ENCODE measurements at regions of chr1 and their contacts with region 1.

Region 1: DNA sequence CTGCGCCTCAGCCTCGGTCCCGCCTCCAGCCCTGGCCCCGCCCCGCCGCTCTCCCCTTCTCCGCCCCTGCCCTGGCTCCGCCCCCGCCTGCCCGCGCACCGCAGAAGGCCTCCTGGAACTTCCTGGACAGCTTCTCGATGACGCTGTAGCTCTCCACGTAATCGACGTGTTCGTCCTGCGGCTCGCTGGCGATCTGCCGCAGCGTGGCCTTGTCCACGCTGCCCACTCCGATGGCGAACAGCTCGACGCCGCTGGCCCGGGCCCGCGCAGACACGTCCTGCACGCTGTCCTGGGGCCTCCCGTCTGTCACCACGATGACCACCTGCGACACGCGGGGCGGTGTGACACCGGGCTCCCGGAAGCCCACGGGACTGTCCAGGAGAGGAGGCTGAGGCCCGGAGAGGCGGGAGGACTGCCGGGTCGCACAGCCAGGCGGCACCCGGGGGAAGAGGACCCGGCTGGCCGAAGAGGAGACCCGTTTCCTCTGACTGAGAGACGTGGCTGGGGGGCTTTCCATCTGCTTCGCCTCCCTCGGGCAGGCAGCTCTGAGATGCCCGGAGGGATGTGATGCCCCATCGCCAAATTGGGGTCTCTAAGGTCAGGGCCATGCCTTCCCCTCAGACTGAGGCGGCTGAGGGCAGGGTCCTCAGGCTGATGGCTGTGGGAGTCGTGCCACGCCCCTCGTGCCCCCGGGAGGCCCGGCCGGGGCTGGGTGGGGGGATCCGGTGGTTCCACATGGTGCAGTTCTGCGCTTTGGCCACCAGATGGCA is 4.6 kb downstream of the MATN1 start:
- DNase-seq: peak; percentile 75 to 97 (median 96)
- ATAC-seq: peak; percentile 78
- H3K4me3 ChIP-seq: peak overlapping the region; percentile 88
- H3K4me3 Mint-ChIP-seq: peak overlapping the region; percentile 83 to 96 (median 91)
- H3K27ac ChIP-seq: peak overlapping the region; percentile 100
- H3K27ac Mint-ChIP-seq: peak overlapping the region; percentile 86 to 97 (median 94)
- H3K4me1 ChIP-seq: peaks cover 10 to 37% of the 10 kb centered on the region in 2 donors
- H3K4me1 Mint-ChIP-seq: peaks cover 18 to 49% (median 38%) of the 10 kb centered on the region in 7 donors
- H3K27me3 ChIP-seq: no peaks in the 10 kb centered on the region
- H3K27me3 Mint-ChIP-seq: no peaks in the 10 kb centered on the region

Region 2: DNA sequence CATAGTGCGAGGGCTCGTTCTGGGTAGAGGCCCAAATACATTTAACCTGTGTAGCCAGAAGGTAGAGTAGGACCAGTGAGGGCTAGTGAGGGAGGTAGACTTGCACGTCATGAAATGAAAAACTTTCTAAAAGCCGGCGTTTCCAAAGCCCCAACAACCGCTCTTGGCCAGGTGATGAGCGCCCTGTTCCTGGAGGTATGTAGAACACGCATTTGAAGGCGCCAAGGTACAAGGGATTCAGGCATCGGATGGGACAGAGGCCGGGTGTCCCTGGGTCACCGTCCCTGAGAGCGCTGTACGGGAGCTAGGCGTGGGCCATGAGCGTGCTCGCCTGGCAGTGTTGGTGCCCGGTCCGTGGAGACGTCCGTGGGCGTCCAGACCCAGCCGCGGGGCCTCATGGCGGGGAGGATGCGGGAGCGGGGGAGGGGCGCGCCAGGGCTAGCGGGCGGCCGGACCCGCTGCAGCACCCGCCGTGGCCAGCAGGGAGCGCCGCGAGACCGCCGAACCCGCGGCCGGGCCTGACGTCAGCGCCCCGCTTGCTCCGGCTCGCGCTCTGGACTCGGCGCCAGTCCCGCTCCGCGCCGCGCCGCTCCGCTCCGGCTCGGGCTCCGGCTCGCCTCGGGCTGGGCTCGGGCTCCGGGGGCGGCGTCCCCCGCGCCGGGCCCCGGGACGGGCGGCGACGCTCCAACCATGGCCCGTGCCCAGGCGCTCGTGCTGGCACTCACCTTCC is 1482.7 kb before region 1 on chr1 and contains the start of gene PTPRU:
- CTCF ChIA-PET with region 1: interaction called, 3 read pairs
- POLR2A ChIA-PET with region 1: no interaction called
- intact Hi-C with region 1: loop called in 1 of 2 experiments (anchors 2 kb)
- DNase-seq: peak; percentile 50 to 96 (median 78)
- ATAC-seq: peak; percentile 96
- H3K4me3 ChIP-seq: peak within 1 kb of the TSS; percentile 14
- H3K4me3 Mint-ChIP-seq: peak within 1 kb of the TSS; percentile 79 to 97 (median 86)
- H3K27ac ChIP-seq: no peak within 1 kb of the TSS
- H3K27ac Mint-ChIP-seq: peak within 1 kb of the TSS in 6 of 9 donors; percentile 0 to 80 (median 25)
- H3K4me1 ChIP-seq: peaks cover 7 to 17% of the 10 kb centered on the region in 2 donors
- H3K4me1 Mint-ChIP-seq: peaks cover 19 to 29% (median 28%) of the 10 kb centered on the region in 7 donors
- H3K27me3 ChIP-seq: peaks cover 12 to 14% of the 10 kb centered on the region in 2 donors
- H3K27me3 Mint-ChIP-seq: peaks cover 34 to 66% (median 50%) of the 10 kb centered on the region in 5 donors
- total RNA-seq, gene PTPRU: 0.17 to 0.42 TPM in 2 of 5 experiments, not detected in the others

Region 3: GRCh38 chr1:30743584-30744059 is 24.8 kb after region 1 on chr1:
- CTCF ChIA-PET with region 1: interaction called, 52 read pairs
- POLR2A ChIA-PET with region 1: interaction called, 1,281 read pairs
- intact Hi-C with region 1: loop called (anchors 1 kb)
- DNase-seq: peak in 8 of 9 donors; percentile 58 to 90 (median 82)
- ATAC-seq: peak; percentile 83
- H3K4me3 ChIP-seq: peak overlapping the region; percentile 45
- H3K4me3 Mint-ChIP-seq: peak overlapping the region; percentile 82 to 98 (median 91)
- H3K27ac ChIP-seq: peak overlapping the region; percentile 98
- H3K27ac Mint-ChIP-seq: peak overlapping the region; percentile 90 to 100 (median 97)
- H3K4me1 ChIP-seq: peaks cover 84 to 86% of the 10 kb centered on the region in 2 donors
- H3K4me1 Mint-ChIP-seq: peaks cover 75 to 100% (median 97%) of the 10 kb centered on the region in 7 donors
- H3K27me3 ChIP-seq: no peaks in the 10 kb centered on the region
- H3K27me3 Mint-ChIP-seq: no peaks in the 10 kb centered on the region

Region 4: DNA sequence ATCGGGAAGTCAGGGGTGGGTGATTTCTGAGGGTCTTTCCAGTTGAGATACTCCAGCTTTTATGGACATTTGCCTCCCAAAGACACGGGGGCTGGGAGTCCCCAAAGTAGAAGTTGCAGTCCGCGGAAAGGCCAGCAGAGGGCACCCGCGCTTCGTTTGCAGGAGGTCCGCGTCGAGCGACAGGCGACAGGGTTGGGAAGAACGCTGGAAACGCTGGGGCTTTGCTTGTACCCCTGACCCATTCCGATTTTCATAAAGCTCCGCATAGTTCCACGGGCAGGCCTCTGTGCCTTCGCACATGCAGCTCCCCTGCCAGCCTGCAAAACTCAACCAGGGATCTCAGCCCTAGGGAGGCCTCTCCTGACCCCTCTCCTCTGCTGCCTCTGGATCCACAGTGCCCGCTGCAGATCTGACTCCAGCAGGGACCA is 83.0 kb after region 1 on chr1:
- CTCF ChIA-PET with region 1: interaction called, 19 read pairs
- POLR2A ChIA-PET with region 1: no interaction called
- intact Hi-C with region 1: no loop called
- DNase-seq: peak; percentile 47 to 85 (median 70)
- ATAC-seq: peak; percentile 85
- H3K4me3 ChIP-seq: no peak overlapping the region
- H3K4me3 Mint-ChIP-seq: peak overlapping the region in 4 of 10 donors; percentile 25 to 66 (median 42)
- H3K27ac ChIP-seq: no peak overlapping the region
- H3K27ac Mint-ChIP-seq: peak overlapping the region in 1 of 9 donors; percentile 69
- H3K4me1 ChIP-seq: no peaks in the 10 kb centered on the region
- H3K4me1 Mint-ChIP-seq: peaks cover 0 to 9% (median 4%) of the 10 kb centered on the region in 7 donors
- H3K27me3 ChIP-seq: peaks cover 0 to 5% of the 10 kb centered on the region in 2 donors
- H3K27me3 Mint-ChIP-seq: peaks cover 25 to 48% (median 29%) of the 10 kb centered on the region in 5 donors

Region 5: DNA sequence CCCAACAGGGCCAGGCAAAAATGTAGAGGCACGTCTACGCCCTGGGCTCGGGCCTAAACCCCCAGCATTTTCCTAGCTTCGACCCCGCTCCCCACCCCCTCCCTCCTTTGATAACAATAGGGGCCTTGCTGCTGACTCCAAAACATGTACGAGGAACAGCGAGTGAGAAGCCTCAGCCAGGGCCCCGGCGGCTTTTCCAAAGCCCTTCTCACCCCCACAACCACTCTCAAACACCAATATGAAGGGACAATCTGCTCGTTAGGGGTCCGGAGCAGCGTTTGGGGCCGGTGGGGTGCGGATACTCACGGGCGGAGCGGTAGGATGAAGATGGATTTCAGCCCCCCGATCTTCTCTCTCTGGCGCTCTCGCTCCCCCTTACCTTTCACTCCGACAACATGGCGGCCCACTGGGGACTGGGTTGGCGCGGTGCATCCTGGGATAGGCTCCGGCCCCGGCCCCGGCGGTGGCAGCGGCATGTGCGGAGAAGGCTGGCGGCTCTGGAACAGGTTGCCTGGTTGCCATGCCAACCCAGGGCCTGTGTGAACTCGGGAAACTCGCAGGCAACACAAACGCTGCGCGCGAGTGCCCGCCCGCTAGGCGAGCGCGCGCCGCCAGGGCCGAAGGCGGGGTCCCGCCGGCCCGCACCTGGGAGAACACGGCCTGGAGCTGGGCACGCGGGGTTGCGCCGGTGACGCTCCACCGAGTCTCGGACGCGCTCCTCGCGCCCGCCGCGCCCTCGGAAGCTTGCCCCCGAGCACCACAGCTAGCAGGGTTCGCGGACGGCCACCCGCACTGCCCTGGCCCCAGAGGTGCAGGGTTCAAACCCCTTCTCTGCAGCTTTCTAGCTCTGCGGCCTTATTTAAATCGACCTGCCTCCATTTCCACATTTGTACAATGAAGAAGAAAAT is 346.7 kb after region 1 on chr1 and contains the start of gene PUM1:
- CTCF ChIA-PET with region 1: no interaction called
- POLR2A ChIA-PET with region 1: no interaction called
- intact Hi-C with region 1: loop called (anchors 1 to 10 kb)
- DNase-seq: peak; percentile 95 to 99 (median 97)
- ATAC-seq: peak; percentile 99
- H3K4me3 ChIP-seq: peak within 1 kb of the TSS; percentile 97
- H3K4me3 Mint-ChIP-seq: peak within 1 kb of the TSS; percentile 96 to 100 (median 98)
- H3K27ac ChIP-seq: peak within 1 kb of the TSS; percentile 95
- H3K27ac Mint-ChIP-seq: peak within 1 kb of the TSS; percentile 97 to 99 (median 98)
- H3K4me1 ChIP-seq: peaks cover 10 to 18% of the 10 kb centered on the region in 2 donors
- H3K4me1 Mint-ChIP-seq: peaks cover 20 to 38% (median 29%) of the 10 kb centered on the region in 7 donors
- H3K27me3 ChIP-seq: no peaks in the 10 kb centered on the region
- H3K27me3 Mint-ChIP-seq: no peaks in the 10 kb centered on the region
- total RNA-seq, gene PUM1: 114 to 226 (median 174) TPM

Region 6: GRCh38 chr1:31335007-31335406 is 616.2 kb after region 1 on chr1:
- CTCF ChIA-PET with region 1: no interaction called
- POLR2A ChIA-PET with region 1: no interaction called
- intact Hi-C with region 1: loop called in 1 of 2 experiments (anchors 2 kb)
- DNase-seq: peak in 5 of 9 donors; percentile 4 to 22 (median 7)
- ATAC-seq: no peak
- H3K4me3 ChIP-seq: no peak overlapping the region
- H3K4me3 Mint-ChIP-seq: no peak overlapping the region
- H3K27ac ChIP-seq: no peak overlapping the region
- H3K27ac Mint-ChIP-seq: no peak overlapping the region
- H3K4me1 ChIP-seq: no peaks in the 10 kb centered on the region
- H3K4me1 Mint-ChIP-seq: peaks cover 0 to 7% (median 4%) of the 10 kb centered on the region in 7 donors
- H3K27me3 ChIP-seq: no peaks in the 10 kb centered on the region
- H3K27me3 Mint-ChIP-seq: no peaks in the 10 kb centered on the region